ENCODE measurements at regions of chr2 and their contacts with region 1.

Region 1: DNA sequence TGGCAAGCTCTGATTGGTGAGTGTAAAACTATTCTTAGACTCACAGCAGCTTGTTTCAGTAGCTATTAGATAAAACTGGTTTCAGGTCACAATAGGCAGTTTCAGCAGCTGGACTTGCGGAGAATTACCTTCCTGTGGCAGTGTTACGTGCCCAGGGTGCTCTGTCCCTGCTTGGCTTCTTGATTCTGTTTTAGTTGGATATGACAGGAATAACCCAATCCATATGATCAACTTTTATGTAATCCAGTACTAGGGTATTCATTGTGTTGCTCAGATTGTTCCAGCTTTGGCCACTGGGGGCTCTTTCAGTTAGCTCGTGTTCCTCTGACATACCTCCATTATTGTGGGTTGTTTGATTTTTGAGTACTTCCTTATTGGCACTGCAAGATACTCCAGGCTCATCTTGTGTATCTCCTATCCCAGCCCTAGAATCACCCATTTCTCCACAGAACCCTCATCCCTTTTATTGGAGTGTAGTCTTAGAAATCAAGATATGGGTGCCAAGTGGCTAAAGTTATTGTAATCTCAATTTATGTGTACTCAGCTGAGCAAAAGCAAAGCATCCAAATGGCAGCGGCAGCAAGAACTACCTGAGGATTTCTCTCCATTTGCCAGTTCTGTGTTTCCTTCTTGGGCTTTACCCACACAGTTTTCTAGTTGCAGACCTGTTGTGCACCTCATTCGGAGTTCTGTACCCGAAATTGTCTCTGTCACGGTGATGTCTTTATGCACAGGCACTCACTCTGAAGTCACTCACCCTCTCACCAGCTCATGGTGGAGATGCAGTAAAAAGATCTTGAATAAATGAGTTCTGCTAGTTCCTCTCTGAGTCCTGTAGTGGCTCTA is 43.4 kb downstream of the INPP4A start:
- DNase-seq: peak; percentile 55
- CTCF ChIP-seq: peak; percentile 25

Region 2: GRCh38 chr2:98455494-98455976 is 32.5 kb before region 1 on chr2:
- CTCF ChIA-PET with region 1: interaction called, 42 read pairs
- POLR2A ChIA-PET with region 1: interaction called, 3 read pairs
- DNase-seq: peak; percentile 41
- CTCF ChIP-seq: no peak

Region 3: DNA sequence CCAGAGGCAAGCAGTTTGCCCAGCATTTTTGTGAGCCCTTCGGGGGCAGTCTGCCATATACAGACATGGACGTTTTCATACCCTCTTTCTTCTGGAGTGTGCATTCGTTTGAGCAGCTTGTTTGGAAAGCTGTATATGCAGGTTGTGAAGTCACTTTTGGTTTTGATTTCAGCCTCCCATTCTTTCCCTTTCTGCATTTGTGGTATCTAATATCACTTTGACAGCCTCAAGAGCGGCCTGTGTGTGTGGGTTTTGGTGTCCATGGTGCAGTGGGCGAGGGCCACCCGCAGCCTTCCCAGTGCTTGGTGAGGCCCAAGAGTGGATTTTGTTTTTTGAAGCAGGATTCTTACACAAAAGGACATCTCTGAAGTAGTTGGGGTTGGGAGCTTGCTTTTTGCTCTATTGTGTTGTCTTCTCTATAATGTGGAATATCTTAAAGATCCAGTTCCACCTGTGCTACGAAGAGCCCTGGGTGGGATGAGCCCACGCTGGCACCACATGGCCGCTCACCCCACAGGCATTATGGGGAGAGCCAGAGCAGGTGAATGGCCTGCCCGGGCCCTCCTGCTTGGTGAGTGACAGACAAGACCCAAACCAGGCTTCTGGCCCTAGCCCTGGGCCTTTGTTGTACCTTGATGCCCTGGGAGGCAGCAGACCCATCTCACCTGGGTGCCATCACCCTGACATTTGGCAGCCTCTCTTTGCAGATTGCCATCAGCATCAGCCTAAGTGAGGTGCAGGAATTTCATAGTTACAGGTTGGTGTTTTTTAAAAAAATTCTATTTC is 13.8 kb before region 1 on chr2:
- CTCF ChIA-PET with region 1: interaction called, 35 read pairs
- POLR2A ChIA-PET with region 1: interaction called, 12 read pairs
- DNase-seq: peak; percentile 52
- CTCF ChIP-seq: no peak

Region 4: DNA sequence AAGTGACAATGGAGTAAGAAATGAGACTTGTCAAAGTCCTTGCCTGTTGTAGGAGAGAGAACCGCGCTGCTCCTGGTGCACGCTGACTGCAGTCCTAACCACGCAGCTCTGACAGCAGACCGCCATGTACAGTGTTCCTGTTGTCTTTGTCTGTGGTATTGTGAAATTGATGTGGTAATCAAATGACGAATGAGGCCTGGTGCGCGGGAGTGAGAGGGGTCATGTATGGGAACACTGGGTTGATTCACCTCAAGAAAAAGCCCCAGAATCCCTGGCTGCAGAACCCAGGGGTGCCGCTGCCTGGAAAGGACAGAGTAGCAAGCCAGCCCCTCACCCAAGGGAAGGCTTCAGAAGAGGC is 20.7 kb after region 1 on chr2:
- CTCF ChIA-PET with region 1: interaction called, 26 read pairs
- POLR2A ChIA-PET with region 1: no interaction called
- DNase-seq: no peak
- CTCF ChIP-seq: no peak

Region 5: DNA sequence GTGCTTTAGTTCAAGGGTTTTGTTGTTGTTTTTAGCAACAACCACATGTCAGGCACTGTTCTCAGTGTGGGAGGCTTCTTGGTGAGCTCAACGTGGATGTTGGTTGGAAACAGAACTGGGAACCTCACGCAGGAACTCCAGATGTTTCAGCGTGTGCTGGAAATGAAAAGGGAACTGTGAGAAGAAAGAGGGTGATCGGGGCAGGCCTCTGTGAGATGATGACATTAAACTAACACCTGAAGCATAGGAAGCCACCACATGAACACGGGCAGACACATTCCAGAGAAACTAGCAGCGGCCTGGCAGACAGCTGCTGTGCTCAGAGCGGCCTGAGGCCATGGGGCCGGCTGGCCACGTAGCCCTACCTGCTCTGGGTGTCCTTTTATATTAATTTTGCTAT is 53.9 kb after region 1 on chr2:
- CTCF ChIA-PET with region 1: interaction called, 13 read pairs
- POLR2A ChIA-PET with region 1: interaction called, 3 read pairs
- DNase-seq: peak; percentile 50
- CTCF ChIP-seq: no peak